ENCODE measurements at regions of chr20 and their contacts with region 1.

Region 1: GRCh38 chr20:31605031-31605901 is at the start of gene ID1:
- DNase-seq: peak; percentile 88
- ATAC-seq: peak; percentile 90
- H3K4me3 Mint-ChIP-seq: peak within 1 kb of the TSS; percentile 84
- H3K27ac Mint-ChIP-seq: peak within 1 kb of the TSS; percentile 11
- H3K4me1 Mint-ChIP-seq: peaks cover 20% of the 10 kb centered on the region
- H3K27me3 Mint-ChIP-seq: peaks cover 70% of the 10 kb centered on the region
- total RNA-seq, gene ID1: 0.72 to 1.2 TPM

Region 2: GRCh38 chr20:31508517-31509244 is 96.6 kb before region 1 on chr20:
- POLR2A ChIA-PET with region 1: no interaction called
- DNase-seq: no peak
- ATAC-seq: no peak
- H3K4me3 Mint-ChIP-seq: no peak overlapping the region
- H3K27ac Mint-ChIP-seq: no peak overlapping the region
- H3K4me1 Mint-ChIP-seq: peaks cover under 1% of the 10 kb centered on the region
- H3K27me3 Mint-ChIP-seq: peaks cover 12% of the 10 kb centered on the region

Region 3: GRCh38 chr20:31572701-31573554 is 32.3 kb before region 1 on chr20:
- POLR2A ChIA-PET with region 1: interaction called, 36 read pairs
- DNase-seq: peak; percentile 89
- ATAC-seq: peak; percentile 90
- H3K4me3 Mint-ChIP-seq: peak overlapping the region; percentile 93
- H3K27ac Mint-ChIP-seq: peak overlapping the region; percentile 93
- H3K4me1 Mint-ChIP-seq: peaks cover 17% of the 10 kb centered on the region
- H3K27me3 Mint-ChIP-seq: no peaks in the 10 kb centered on the region

Region 4: DNA sequence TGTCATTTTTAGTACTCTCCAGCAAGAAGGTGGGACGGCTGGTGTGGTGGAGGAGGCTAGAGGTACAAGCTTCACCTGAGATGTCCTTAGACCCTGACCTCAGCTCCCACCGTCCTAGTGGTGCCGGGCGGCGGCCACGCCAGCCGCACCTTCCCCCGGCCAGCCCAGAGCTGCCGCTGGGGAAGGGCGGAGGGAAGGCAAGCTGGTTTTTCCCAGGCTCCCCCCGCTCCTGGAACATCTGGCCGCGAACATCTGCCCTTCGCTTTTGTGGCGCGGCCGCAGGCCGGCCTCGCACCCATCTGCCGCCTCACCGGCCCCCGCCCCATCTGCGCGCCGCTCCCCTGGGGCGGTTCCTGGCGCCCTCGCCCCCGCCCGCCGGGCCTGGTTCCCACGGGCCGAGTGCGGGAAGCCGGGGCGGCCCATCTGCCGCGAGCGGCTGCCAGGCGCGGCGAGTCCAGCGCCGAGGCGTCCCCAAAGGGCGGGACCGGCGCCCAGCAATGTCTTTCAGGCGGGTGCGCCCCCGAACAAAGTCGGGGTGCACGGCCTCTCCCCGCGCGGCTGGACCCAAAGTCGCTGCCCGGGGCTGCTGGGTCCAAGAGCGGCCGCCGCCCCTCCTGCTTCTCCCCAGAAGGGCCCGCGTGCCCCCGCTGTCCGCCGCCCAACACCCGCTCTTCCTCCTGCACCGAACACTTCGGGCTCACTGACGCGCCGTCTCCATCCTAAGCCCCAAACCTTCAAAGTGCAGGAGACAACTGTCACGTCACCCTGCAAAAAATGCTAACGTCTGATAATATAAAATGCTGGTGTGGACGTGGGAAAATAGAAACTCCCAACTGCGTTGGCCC is 17.5 kb before region 1 on chr20:
- POLR2A ChIA-PET with region 1: no interaction called
- DNase-seq: no peak
- ATAC-seq: peak; percentile 56
- H3K4me3 Mint-ChIP-seq: peak overlapping the region; percentile 85
- H3K27ac Mint-ChIP-seq: no peak overlapping the region
- H3K4me1 Mint-ChIP-seq: peaks cover 5% of the 10 kb centered on the region
- H3K27me3 Mint-ChIP-seq: peaks cover 48% of the 10 kb centered on the region

Region 5: DNA sequence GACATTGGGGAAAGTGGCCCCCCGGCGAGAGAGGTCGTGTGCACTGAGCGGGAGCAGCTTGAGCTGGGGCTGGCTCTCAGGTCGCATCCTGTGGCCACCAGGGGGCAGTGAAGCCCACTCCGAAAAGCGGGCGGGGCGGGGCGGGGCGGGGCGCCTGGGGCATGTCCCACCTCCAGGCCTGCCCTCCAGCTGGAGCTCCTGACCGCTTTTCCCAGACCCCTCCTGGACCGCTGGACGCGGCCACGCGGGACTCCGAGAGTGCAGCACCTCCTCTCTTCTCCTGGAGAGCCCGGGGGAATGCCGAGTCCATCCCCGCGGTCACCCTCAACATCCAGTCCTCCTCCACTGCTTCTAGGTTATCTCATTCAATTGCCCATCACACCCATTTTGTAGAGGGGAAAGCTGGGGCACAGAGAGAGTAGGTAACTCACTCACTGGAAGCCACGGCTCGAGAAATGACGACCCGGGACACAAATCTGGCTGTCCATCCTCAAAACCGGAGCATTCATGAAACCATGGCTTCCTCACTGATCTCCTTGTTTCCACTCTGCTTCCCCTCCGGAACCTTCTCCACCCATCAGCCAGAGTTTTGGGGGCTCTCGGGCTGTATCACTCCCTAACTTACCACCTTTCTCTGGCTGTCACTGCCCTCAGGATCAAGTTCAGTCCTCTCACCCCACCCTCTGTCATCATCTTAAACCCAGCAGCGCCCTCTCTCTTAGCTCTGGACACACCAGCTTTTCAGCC is 56.5 kb after region 1 on chr20:
- POLR2A ChIA-PET with region 1: no interaction called
- DNase-seq: peak; percentile 86
- ATAC-seq: peak; percentile 73
- H3K4me3 Mint-ChIP-seq: peak overlapping the region; percentile 84
- H3K27ac Mint-ChIP-seq: peak overlapping the region; percentile 87
- H3K4me1 Mint-ChIP-seq: peaks cover 42% of the 10 kb centered on the region
- H3K27me3 Mint-ChIP-seq: no peaks in the 10 kb centered on the region